Activated CD8-positive, alpha-beta T cell treated with anti-CD3 and anti-CD28 coated beads for 36 hours (primary cell): ENCODE measurements at regions of chr3 and their contacts with region 1.

Region 1: DNA sequence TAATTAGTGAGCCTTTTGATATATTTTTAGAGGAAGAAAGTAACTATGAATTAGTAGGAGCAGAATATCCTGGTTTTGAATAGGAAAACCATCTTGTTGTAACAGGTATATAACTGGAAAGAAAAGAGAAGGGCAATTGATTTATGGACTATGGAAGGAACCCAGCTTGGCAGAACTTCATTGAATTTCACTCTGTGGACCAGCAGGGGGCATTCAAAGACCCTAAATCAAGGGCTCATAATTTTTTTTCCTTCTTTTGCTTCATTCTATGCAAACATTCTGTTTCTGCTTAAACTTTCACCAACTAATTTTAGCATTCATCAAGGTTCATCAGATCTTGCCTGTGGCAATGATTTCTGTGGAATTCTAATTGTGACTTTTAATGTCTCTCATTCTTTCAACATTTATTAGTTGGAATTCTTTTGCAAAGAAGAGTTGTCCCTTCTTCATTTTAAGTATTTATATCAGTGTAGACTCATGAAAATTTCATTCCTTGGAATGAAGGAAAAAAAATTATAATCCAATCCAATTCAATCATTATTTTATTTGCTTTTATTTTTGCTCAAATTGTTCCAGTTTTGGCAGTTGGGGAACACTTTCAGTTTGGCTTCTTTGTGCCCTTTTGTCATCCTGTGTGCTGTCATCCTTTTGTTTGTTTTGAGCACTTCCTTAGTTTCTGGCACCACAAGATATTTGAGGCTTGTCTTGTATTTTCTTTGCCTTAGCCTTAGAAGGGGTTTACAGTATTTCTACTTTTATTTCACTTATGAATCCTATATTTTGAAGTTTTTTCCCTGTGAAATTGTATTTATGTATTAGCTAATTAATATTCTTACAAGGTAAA is 30.4 kb downstream of the NXPE3 start:
- DNase-seq: peak; percentile 54
- ATAC-seq: peak; percentile 80
- H3K4me3 Mint-ChIP-seq: no peak overlapping the region
- H3K27ac Mint-ChIP-seq: peak overlapping the region; percentile 55
- H3K4me1 Mint-ChIP-seq: peaks cover 51% of the 10 kb centered on the region
- H3K27me3 Mint-ChIP-seq: no peaks in the 10 kb centered on the region
- CTCF ChIP-seq: peak; percentile 90

Region 2: DNA sequence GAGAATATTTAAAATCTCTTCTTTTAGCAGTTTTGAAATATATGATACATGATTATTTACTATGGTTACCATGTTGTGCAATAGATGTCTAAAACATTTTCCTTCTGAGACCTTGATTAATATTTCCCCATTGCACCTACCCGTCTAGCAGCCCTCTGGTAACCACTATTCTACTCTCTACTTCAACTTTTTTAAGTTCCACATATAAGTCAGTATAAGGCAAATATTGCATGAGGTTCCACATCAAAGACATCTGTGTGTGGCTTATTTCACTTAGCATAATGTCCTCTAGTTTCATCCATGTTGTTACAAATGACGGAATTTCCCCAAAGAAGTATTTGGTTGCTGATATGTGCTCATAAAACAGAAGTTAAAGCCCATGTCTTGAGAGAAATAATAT is 10.4 kb after region 1 on chr3:
- CTCF ChIA-PET with region 1: interaction called, 17 read pairs
- POLR2A ChIA-PET with region 1: interaction called, 3 read pairs
- intact Hi-C with region 1: no loop called
- DNase-seq: no peak
- ATAC-seq: peak; percentile 66
- H3K4me3 Mint-ChIP-seq: no peak overlapping the region
- H3K27ac Mint-ChIP-seq: peak overlapping the region; percentile 63
- H3K4me1 Mint-ChIP-seq: peaks cover 51% of the 10 kb centered on the region
- H3K27me3 Mint-ChIP-seq: no peaks in the 10 kb centered on the region
- CTCF ChIP-seq: no peak

Region 3: GRCh38 chr3:101827211-101828174 is 18.1 kb after region 1 on chr3:
- CTCF ChIA-PET with region 1: interaction called, 17 read pairs
- POLR2A ChIA-PET with region 1: interaction called, 3 read pairs
- intact Hi-C with region 1: no loop called
- DNase-seq: peak; percentile 98
- ATAC-seq: peak; percentile 86
- H3K4me3 Mint-ChIP-seq: peak overlapping the region; percentile 84
- H3K27ac Mint-ChIP-seq: peak overlapping the region; percentile 95
- H3K4me1 Mint-ChIP-seq: peaks cover 63% of the 10 kb centered on the region
- H3K27me3 Mint-ChIP-seq: no peaks in the 10 kb centered on the region
- CTCF ChIP-seq: no peak

Region 4: GRCh38 chr3:102084006-102084405 is 274.6 kb after region 1 on chr3:
- CTCF ChIA-PET with region 1: interaction called, 10 read pairs
- POLR2A ChIA-PET with region 1: interaction called, 4 read pairs
- intact Hi-C with region 1: no loop called
- DNase-seq: no peak
- ATAC-seq: no peak
- H3K4me3 Mint-ChIP-seq: no peak overlapping the region
- H3K27ac Mint-ChIP-seq: no peak overlapping the region
- H3K4me1 Mint-ChIP-seq: peaks cover 35% of the 10 kb centered on the region
- H3K27me3 Mint-ChIP-seq: peaks cover 2% of the 10 kb centered on the region
- CTCF ChIP-seq: no peak

Region 5: GRCh38 chr3:102536456-102536855 is 727.1 kb after region 1 on chr3:
- CTCF ChIA-PET with region 1: interaction called, 10 read pairs
- POLR2A ChIA-PET with region 1: no interaction called
- intact Hi-C with region 1: loop called (anchors 2 kb)
- DNase-seq: no peak
- ATAC-seq: no peak
- H3K4me3 Mint-ChIP-seq: no peak overlapping the region
- H3K27ac Mint-ChIP-seq: no peak overlapping the region
- H3K4me1 Mint-ChIP-seq: no peaks in the 10 kb centered on the region
- H3K27me3 Mint-ChIP-seq: peaks cover 8% of the 10 kb centered on the region
- CTCF ChIP-seq: peak; percentile 29